PC-9 (cell line): ENCODE measurements at regions of chr19 and their contacts with region 1.

Region 1: GRCh38 chr19:438416-438958 is 22.3 kb downstream of the SHC2 start:
- DNase-seq: no peak
- H3K4me3 ChIP-seq: no peak overlapping the region
- H3K27ac ChIP-seq: no peak overlapping the region
- H3K4me1 ChIP-seq: no peaks in the 10 kb centered on the region
- H3K27me3 ChIP-seq: peaks cover 72% of the 10 kb centered on the region
- CTCF ChIP-seq: no peak

Region 2: DNA sequence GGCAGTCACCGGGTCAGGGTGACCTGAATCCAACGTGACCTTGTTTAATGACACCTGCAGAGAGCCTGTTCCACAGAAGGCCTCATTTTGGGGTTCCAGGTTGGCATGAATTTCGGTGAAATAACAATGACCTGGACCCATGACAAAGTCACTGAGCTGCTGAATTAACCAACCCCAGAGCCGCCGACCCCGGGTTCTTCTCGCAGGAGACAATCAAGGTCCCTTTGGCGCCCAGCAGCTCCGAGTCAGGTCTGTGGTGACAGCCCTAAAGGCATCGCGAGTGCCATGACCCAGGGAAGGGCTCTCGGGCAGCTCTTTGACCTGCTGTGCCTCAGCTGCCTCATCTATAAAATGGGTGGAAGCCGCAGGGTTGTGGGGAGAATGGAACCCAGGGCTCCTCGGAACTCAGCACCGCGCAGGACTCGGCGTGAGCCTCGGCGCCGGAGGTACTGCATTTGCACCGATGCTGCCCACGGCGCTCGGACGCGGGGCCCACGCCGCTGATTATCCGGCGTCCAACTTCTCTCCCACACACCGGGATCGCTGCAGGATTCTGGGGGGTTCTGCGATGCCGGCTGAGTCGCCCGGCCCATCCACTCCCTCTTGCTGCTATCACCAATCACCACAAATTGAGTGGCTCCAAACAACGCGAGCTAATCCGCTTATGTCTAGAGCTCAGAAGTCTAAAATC is 16.7 kb after region 1 on chr19:
- CTCF ChIA-PET with region 1: no interaction called
- POLR2A ChIA-PET with region 1: no interaction called
- intact Hi-C with region 1: no loop called
- DNase-seq: no peak
- H3K4me3 ChIP-seq: no peak overlapping the region
- H3K27ac ChIP-seq: no peak overlapping the region
- H3K4me1 ChIP-seq: no peaks in the 10 kb centered on the region
- H3K27me3 ChIP-seq: peaks cover 51% of the 10 kb centered on the region
- CTCF ChIP-seq: no peak

Region 3: DNA sequence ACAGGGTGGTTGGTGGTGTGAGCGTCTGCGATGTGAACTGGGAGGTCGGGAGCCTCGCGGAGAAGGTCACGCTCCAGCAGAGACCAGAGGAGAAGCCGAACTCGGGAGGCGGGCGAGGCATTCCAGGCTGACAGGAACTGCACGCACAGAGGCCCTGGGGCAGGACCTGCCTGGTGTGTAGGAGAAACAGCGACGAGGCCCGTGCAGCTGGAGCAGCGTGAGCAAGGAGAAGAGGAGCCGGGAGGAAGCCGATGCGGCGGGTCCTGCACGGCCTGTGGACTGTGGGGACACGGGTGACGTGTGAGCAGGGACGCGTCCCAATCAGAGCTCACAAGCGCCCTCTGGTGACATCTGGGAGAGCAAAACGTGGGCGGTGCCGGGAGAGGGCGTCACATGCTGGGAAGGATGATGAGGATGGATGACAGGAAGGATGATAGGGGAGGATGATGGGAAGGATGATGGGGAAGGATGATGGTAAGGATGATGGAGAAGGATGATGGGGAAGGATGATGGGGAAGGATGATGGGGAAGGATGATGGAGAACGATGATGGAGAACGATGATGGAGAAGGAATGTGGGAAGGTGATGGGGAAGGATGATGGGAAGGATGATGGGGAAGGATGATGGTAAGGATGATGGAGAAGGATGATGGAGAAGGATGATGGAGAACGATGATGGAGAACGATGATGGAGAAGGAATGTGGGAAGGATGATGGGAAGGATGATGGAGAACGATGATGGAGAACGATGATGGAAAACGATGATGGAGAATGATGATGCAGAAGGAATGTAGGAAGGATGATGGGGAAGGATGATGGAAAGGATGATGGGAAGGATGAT is 41.7 kb after region 1 on chr19:
- CTCF ChIA-PET with region 1: no interaction called
- POLR2A ChIA-PET with region 1: interaction called, 11 read pairs
- intact Hi-C with region 1: no loop called
- DNase-seq: peak in 1 of 2 experiments; percentile 41
- H3K4me3 ChIP-seq: no peak overlapping the region
- H3K27ac ChIP-seq: no peak overlapping the region
- H3K4me1 ChIP-seq: no peaks in the 10 kb centered on the region
- H3K27me3 ChIP-seq: no peaks in the 10 kb centered on the region
- CTCF ChIP-seq: peak; percentile 28; the same call in 1 of the 2 replicates